ENCODE measurements at regions of chr7 and their contacts with region 1.

Region 1: DNA sequence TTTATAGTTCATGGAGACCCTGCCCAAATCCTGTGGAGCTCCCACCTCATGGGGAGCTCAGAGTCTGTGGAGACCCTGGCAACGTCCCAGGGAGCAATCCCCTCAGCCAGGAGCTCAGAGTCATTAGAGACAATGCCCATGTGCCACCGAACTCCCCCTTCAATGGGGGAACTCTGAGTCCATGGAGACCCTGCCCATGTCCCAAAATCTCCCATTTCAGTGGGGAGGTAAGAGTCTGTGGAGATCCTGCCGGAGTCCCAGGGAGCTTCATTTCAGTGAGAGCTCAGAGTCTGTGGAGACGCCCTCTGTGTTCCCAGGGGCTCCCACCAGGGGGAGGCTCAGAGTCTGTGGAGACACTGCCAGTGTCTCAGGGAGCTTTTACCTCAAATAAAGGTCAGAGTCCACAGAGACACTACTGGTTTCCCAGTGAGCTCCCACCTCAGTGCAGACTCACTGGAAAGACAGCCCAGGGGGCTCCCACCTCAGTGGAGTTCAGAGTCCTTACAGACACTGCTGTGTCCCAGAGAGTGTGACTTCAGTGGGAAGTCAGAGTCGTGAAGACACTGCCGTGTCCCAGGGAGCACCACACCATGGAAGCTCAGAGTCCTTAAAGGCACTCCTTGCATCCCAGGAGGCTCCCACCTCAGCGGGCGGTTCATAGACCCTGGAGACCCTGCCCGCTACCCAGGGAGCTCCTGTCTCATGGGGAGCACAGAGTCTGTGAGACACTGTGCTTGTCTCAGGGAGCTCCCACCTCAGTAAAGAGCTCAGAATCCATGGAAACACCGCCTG is 5.0 kb downstream of the MYO1G start:
- DNase-seq: peak; percentile 74
- ATAC-seq: peak; percentile 26
- H3K4me3 Mint-ChIP-seq: no peak overlapping the region
- H3K27ac Mint-ChIP-seq: peak overlapping the region; percentile 65
- H3K4me1 Mint-ChIP-seq: peaks cover 51% of the 10 kb centered on the region
- H3K27me3 Mint-ChIP-seq: no peaks in the 10 kb centered on the region

Region 2: DNA sequence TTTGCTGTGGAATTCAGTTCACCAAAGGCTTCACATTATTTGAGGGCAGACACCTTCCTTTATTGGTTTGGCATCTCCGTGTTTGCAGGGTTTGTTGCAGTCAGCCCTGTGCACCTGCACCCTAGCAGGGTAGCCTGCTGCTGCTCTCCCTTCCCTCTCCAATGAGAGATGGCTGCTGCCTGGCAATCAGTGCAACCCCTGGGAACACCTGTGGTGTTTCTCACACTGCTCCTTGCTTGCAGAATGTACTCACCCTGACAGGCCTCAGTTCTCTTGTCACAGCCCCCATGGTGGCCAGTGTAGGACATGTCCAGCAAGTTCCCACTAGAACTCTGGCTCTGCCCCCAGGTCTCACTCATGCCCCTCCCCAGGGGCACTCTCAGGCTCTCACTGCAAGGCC is 189.4 kb before region 1 on chr7:
- CTCF ChIA-PET with region 1: no interaction called
- POLR2A ChIA-PET with region 1: no interaction called
- DNase-seq: no peak
- ATAC-seq: no peak
- H3K4me3 Mint-ChIP-seq: no peak overlapping the region
- H3K27ac Mint-ChIP-seq: no peak overlapping the region
- H3K4me1 Mint-ChIP-seq: no peaks in the 10 kb centered on the region
- H3K27me3 Mint-ChIP-seq: peaks cover 4% of the 10 kb centered on the region

Region 3: GRCh38 chr7:44858161-44858560 is 115.6 kb before region 1 on chr7:
- CTCF ChIA-PET with region 1: interaction called, 11 read pairs
- POLR2A ChIA-PET with region 1: no interaction called
- DNase-seq: no peak
- ATAC-seq: no peak
- H3K4me3 Mint-ChIP-seq: no peak overlapping the region
- H3K27ac Mint-ChIP-seq: no peak overlapping the region
- H3K4me1 Mint-ChIP-seq: peaks cover 13% of the 10 kb centered on the region
- H3K27me3 Mint-ChIP-seq: peaks cover 4% of the 10 kb centered on the region

Region 4: DNA sequence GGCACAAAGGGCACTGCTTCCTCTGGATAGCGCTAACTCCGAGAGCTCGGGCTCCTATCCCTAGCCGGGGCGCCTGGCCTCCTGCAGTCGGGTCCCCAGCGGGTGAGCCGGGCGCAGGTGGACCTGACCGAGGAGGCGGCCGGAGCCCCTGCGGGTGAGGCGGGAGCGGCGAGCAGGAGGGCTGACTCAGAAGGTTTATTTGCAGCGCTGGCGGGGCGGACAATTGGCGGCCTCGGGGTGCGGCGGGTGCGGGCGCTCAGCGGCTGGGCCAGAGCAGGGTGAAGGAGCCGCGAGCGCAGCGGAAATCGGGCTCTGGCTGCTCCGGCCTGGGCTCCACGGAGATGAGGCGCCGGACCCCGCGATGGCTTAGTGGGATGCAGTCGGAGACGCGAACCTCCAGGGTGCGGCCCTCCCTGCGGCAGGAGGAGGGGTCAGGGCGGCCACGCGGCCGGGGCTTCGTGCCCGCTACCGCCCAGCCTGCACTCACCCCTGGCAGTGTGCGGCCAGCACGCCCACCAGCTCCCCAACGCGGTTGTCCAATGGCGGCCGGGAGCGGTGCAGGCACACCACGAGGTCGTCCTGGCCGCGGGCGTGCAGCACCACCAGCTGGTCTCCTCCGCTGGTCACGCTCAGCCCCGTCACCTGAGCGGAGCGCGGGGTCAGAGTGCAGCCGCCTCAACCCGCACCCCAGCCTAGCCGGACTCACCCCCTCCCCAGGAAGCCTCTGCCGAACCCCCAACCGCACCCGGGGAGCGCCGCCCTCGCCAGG is 11.1 kb before region 1 on chr7:
- CTCF ChIA-PET with region 1: interaction called, 11 read pairs
- POLR2A ChIA-PET with region 1: interaction called, 96 read pairs
- DNase-seq: peak; percentile 32
- ATAC-seq: no peak
- H3K4me3 Mint-ChIP-seq: no peak overlapping the region
- H3K27ac Mint-ChIP-seq: no peak overlapping the region
- H3K4me1 Mint-ChIP-seq: peaks cover 24% of the 10 kb centered on the region
- H3K27me3 Mint-ChIP-seq: no peaks in the 10 kb centered on the region

Region 5: GRCh38 chr7:44999245-45000095 is 25.7 kb after region 1 on chr7:
- CTCF ChIA-PET with region 1: interaction called, 111 read pairs
- POLR2A ChIA-PET with region 1: interaction called, 234 read pairs
- DNase-seq: peak; percentile 100
- ATAC-seq: peak; percentile 95
- H3K4me3 Mint-ChIP-seq: peak overlapping the region; percentile 85
- H3K27ac Mint-ChIP-seq: peak overlapping the region; percentile 91
- H3K4me1 Mint-ChIP-seq: peaks cover 55% of the 10 kb centered on the region
- H3K27me3 Mint-ChIP-seq: no peaks in the 10 kb centered on the region

Region 6: DNA sequence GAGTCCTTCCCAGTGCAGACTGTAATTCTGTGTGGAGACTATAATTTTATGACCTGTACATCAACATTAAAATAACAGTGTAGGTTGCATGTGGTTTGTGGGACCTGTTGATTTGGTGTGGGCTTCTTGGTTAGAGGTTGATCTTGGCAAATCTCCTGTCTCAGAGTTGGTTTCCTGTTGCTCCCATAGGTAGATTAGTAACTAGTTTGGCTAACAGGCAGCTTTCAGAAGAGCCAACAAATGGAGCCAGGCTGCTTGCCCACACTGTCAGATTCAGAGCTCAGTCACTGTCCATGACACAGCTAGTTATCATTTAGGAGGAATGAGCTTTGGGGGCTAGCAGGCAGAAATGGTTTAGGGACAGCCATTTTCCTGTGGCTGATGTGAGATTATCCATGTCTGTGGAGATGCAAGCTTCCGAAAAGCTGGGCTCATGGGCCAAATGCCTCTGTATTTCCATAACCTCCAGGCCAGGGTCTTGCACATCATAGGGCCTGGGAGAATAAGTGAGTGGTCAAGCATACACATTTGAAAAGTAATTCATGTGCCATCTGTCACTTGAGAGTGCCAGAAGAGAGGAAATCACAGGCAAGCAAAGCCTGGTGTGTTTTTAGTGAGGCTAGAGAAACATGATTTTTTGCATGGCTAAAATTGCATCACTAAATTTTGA is 59.6 kb after region 1 on chr7:
- CTCF ChIA-PET with region 1: interaction called, 38 read pairs
- POLR2A ChIA-PET with region 1: interaction called, 125 read pairs
- DNase-seq: peak; percentile 57
- ATAC-seq: peak; percentile 37
- H3K4me3 Mint-ChIP-seq: peak overlapping the region; percentile 63
- H3K27ac Mint-ChIP-seq: peak overlapping the region; percentile 71
- H3K4me1 Mint-ChIP-seq: peaks cover 84% of the 10 kb centered on the region
- H3K27me3 Mint-ChIP-seq: no peaks in the 10 kb centered on the region

Region 7: DNA sequence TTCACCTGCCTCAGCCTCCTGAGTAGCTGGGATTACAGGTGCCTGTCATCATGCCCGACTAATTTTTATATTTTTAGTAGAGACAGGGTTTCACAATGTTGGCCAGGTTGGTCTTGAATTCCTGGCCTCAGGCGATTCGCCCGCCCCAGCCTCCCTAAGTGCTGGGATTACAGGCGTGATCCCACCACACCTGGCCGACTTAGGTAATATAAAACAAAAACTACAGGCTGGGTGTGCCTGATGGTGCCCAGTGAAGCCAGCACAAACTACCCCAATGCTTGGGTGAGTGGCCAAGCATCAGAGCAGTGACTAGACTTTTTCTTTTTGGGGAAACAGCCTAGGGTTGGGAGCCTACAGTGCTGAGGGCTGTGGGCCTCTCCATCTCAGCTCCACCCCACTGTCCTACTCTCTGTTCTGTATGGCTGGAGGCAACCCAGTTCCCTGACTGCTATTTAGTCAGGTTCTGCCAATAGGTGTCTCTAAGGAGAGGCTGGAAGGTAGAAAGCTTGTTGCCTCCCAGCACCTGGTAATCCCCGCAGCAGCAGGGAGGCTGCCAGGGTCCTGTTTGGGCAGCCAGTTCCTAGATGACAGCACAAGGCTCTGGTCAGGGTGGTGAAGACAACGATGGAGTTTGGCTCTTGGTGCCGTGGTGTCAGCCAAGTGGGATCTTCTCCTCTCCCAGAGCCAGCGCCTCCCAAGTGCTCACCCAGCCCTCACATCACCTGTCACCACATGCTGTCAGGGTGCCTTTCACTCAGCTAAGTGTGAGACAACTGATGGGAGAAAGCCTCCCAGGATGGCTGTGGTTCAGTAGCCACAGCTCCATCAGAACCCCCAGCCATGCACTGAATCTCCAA is 125.4 kb after region 1 on chr7:
- CTCF ChIA-PET with region 1: no interaction called
- POLR2A ChIA-PET with region 1: no interaction called
- DNase-seq: no peak
- ATAC-seq: no peak
- H3K4me3 Mint-ChIP-seq: no peak overlapping the region
- H3K27ac Mint-ChIP-seq: no peak overlapping the region
- H3K4me1 Mint-ChIP-seq: peaks cover 1% of the 10 kb centered on the region
- H3K27me3 Mint-ChIP-seq: no peaks in the 10 kb centered on the region

Region 8: GRCh38 chr7:45136106-45137060 is 162.6 kb after region 1 on chr7:
- CTCF ChIA-PET with region 1: interaction called, 90 read pairs
- POLR2A ChIA-PET with region 1: interaction called, 12 read pairs
- DNase-seq: peak; percentile 85
- ATAC-seq: peak; percentile 82
- H3K4me3 Mint-ChIP-seq: no peak overlapping the region
- H3K27ac Mint-ChIP-seq: peak overlapping the region; percentile 27
- H3K4me1 Mint-ChIP-seq: peaks cover 19% of the 10 kb centered on the region
- H3K27me3 Mint-ChIP-seq: peaks cover 9% of the 10 kb centered on the region

Measured in activated CD8-positive, alpha-beta T cell treated with anti-CD3 and anti-CD28 coated beads, Interleukin-2, amount 10 ng/mL, durations not matched to agents 7 days and 5 days (primary cell).